GM13976 (cell line): ENCODE measurements at regions of chr16 and their contacts with region 1.

Region 1: DNA sequence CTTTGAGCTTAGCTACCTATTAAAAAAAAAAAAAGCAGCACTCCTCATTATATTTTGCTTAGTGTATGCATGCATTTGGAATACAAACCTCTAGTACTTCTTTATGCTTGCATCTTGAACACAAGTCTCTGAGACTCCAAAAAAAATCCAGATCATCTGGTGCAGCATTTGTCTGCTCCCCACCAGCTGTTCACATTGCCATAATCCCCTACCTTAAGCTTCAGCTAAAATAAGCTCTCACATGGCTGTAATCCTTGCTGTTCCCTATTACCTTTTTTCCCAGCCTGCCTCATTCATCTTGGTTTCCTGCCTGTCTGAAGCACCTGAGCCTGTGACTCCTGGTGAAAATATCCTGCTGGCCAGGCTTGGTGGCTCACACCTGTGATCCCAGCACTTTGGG is 7.5 kb upstream of the NFATC2IP start:
- DNase-seq: no peak
- CTCF ChIP-seq: no peak

Region 2: GRCh38 chr16:28879841-28880588 is 63.3 kb before region 1 on chr16:
- in situ Hi-C with region 1: loop called (anchors 10 kb)
- DNase-seq: peak; percentile 99
- CTCF ChIP-seq: no peak